Sigmoid colon (tissue), 7 donors: ENCODE measurements at regions of chr19 and their contacts with region 1.

Region 1: DNA sequence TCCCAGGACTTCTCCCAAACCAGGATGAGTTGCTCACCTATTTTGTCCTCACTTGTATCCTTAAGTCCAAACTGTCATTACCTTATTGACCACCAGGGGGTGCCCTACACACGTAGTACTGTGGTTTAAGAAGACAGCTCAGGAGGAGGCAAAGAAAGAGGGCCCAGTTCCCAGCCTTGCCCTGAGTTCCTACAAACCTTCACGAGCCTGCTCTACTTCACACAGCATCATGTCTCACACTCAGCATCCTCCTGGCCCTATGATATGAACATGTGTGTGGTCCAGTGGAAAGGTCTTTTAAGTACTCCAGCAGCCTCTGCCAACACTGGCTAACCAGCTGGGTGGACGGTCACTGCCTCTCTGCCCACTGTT is 8.1 kb upstream of the ZNF784 start:
- DNase-seq: peak; percentile 96
- H3K4me3 ChIP-seq: no peak overlapping the region
- H3K27ac ChIP-seq: peak overlapping the region; percentile 69 to 98 (median 75)
- H3K4me1 ChIP-seq: peaks cover 0 to 34% (median 32%) of the 10 kb centered on the region in 4 donors
- H3K27me3 ChIP-seq: no peaks in the 10 kb centered on the region
- CTCF ChIP-seq: peak; percentile 85 to 95 (median 92)
- EP300 ChIP-seq: no peak
- POLR2A ChIP-seq: no peak

Region 2: GRCh38 chr19:55391702-55392615 is 240.5 kb before region 1 on chr19:
- intact Hi-C with region 1: no loop called
- DNase-seq: no peak
- H3K4me3 ChIP-seq: no peak overlapping the region
- H3K27ac ChIP-seq: no peak overlapping the region
- H3K4me1 ChIP-seq: peaks cover 0 to 34% (median 31%) of the 10 kb centered on the region in 4 donors
- H3K27me3 ChIP-seq: no peaks in the 10 kb centered on the region
- CTCF ChIP-seq: no peak
- EP300 ChIP-seq: no peak
- POLR2A ChIP-seq: no peak

Region 3: DNA sequence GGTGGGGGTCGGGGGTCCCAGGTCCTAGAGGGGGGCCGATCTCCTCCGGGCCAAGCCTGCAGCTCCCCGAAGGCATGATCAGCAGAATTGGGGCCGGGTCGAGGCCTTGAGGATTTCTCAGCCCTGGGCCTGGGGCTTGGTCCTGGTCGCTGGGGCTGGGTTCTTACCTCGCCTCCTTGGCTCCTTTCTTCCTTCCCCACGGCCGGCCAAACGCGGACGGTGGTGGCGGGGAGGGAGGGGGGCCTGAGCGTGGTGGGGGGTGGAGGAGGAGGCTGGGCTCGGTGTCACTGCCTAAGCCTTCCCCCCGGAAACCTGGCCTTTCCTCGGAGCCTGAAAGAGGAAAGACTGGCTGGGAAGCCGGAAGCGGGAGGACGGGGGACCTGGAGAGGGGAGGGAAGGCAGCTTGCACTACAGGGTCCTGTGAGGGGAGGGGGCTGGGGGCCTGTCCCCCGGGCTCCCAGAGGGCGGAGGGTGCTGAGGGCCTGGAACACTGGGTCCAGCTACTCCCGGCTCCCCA is 51.8 kb before region 1 on chr19 and contains the start of gene ZNF579:
- intact Hi-C with region 1: loop called (anchors 2 kb)
- DNase-seq: peak; percentile 93
- H3K4me3 ChIP-seq: peak within 1 kb of the TSS; percentile 71 to 90 (median 85)
- H3K27ac ChIP-seq: peak within 1 kb of the TSS; percentile 86 to 94 (median 90)
- H3K4me1 ChIP-seq: peaks cover 0 to 31% (median 23%) of the 10 kb centered on the region in 4 donors
- H3K27me3 ChIP-seq: no peaks in the 10 kb centered on the region
- CTCF ChIP-seq: no peak
- EP300 ChIP-seq: no peak
- POLR2A ChIP-seq: no peak
- total RNA-seq, gene ZNF579: 1.4 to 3.0 (median 2.2) TPM